Naive thymus-derived CD4-positive, alpha-beta T cell (primary cell): ENCODE measurements at regions of chr9 and their contacts with region 1.

Region 1: GRCh38 chr9:111937781-111938426 is 41.3 kb downstream of the UGCG start:
- DNase-seq: peak; percentile 12 to 71 (median 53)
- ATAC-seq: peak; percentile 96
- H3K4me3 ChIP-seq: peak overlapping the region; percentile 29
- H3K4me3 Mint-ChIP-seq: peak overlapping the region; percentile 52 to 82 (median 76)
- H3K27ac ChIP-seq: peak overlapping the region; percentile 19
- H3K27ac Mint-ChIP-seq: peak overlapping the region; percentile 83 to 93 (median 90)
- H3K4me1 ChIP-seq: peaks cover 15 to 19% of the 10 kb centered on the region in 2 donors
- H3K4me1 Mint-ChIP-seq: peaks cover 20 to 43% (median 33%) of the 10 kb centered on the region in 7 donors
- H3K27me3 ChIP-seq: no peaks in the 10 kb centered on the region
- H3K27me3 Mint-ChIP-seq: no peaks in the 10 kb centered on the region

Region 2: GRCh38 chr9:111805830-111806241 is 132.1 kb before region 1 on chr9:
- CTCF ChIA-PET with region 1: no interaction called
- POLR2A ChIA-PET with region 1: no interaction called
- intact Hi-C with region 1: no loop called
- DNase-seq: no peak
- ATAC-seq: no peak
- H3K4me3 ChIP-seq: no peak overlapping the region
- H3K4me3 Mint-ChIP-seq: no peak overlapping the region
- H3K27ac ChIP-seq: no peak overlapping the region
- H3K27ac Mint-ChIP-seq: no peak overlapping the region
- H3K4me1 ChIP-seq: peaks cover 0 to 4% of the 10 kb centered on the region in 2 donors
- H3K4me1 Mint-ChIP-seq: peaks cover 7 to 28% (median 10%) of the 10 kb centered on the region in 7 donors
- H3K27me3 ChIP-seq: no peaks in the 10 kb centered on the region
- H3K27me3 Mint-ChIP-seq: no peaks in the 10 kb centered on the region

Region 3: GRCh38 chr9:111903996-111904395 is 33.9 kb before region 1 on chr9:
- CTCF ChIA-PET with region 1: no interaction called
- POLR2A ChIA-PET with region 1: no interaction called
- intact Hi-C with region 1: no loop called
- DNase-seq: no peak
- ATAC-seq: no peak
- H3K4me3 ChIP-seq: no peak overlapping the region
- H3K4me3 Mint-ChIP-seq: peak overlapping the region in 5 of 10 donors; percentile 6 to 49 (median 32)
- H3K27ac ChIP-seq: no peak overlapping the region
- H3K27ac Mint-ChIP-seq: peak overlapping the region in 5 of 9 donors; percentile 1 to 82 (median 21)
- H3K4me1 ChIP-seq: peaks cover 30 to 65% of the 10 kb centered on the region in 2 donors
- H3K4me1 Mint-ChIP-seq: peaks cover 37 to 56% (median 54%) of the 10 kb centered on the region in 7 donors
- H3K27me3 ChIP-seq: no peaks in the 10 kb centered on the region
- H3K27me3 Mint-ChIP-seq: no peaks in the 10 kb centered on the region

Region 4: DNA sequence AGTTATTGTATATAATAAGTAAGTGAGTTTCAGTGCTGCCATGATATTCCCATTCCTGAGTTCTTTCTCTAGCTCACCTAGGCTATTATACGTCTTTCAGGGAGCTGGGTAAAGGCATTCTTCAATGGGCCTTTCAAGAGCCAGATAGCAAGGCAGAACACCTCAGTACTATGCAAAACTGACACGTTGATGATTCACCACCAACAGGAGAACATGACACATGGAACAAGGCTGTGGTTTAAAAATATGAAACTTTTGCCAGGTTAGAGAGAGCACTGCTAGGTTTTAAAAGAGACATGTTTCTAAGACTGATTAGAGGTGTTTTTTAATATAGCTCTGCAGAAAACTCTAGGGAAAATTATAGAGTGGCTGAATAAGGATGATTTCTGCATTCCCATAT is 54.6 kb after region 1 on chr9:
- CTCF ChIA-PET with region 1: no interaction called
- POLR2A ChIA-PET with region 1: no interaction called
- intact Hi-C with region 1: loop called in 1 of 2 experiments (anchors 5 kb)
- DNase-seq: peak in 1 of 9 donors; percentile 32
- ATAC-seq: no peak
- H3K4me3 ChIP-seq: no peak overlapping the region
- H3K4me3 Mint-ChIP-seq: no peak overlapping the region
- H3K27ac ChIP-seq: no peak overlapping the region
- H3K27ac Mint-ChIP-seq: no peak overlapping the region
- H3K4me1 ChIP-seq: peaks cover 0 to 13% of the 10 kb centered on the region in 2 donors
- H3K4me1 Mint-ChIP-seq: peaks cover 6 to 23% (median 18%) of the 10 kb centered on the region in 7 donors
- H3K27me3 ChIP-seq: no peaks in the 10 kb centered on the region
- H3K27me3 Mint-ChIP-seq: peaks cover 0 to 17% (median 0%) of the 10 kb centered on the region in 5 donors

Region 5: DNA sequence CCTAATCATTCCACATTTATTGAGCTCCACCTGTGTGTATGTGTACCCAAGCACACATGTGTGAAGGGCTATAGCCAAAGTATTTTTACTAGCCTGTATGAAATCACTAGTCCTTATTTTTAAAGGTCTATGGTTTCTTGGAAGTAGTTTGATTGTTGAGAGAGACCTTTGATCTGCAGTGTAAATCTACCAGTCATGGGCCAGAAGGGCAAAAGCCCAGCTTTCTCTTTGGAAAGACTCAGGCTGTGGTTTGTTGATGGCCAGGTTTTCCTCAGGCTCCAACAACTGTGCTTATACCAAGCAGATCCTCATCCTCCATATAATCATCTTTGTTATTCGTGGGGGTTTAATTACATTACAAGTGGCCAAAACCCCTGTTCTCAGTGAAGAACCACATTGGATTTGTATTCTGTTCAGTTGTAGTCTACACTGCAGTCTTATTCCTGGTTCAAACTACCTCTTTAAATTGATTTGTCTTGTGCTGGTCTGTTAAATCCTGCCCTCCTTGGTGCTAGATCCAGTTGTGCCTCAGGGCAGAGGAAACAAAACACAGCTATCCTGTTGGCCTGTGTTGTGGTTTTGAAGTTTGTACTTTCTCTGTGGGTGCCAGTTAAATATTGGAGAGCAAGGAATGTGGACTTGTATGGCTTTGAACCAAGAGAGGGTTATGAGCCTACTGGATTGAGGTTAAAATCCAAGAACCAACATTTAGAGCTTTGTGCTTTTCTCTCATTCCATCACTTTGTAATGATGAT is 1324.2 kb after region 1 on chr9:
- CTCF ChIA-PET with region 1: no interaction called
- POLR2A ChIA-PET with region 1: no interaction called
- intact Hi-C with region 1: no loop called
- DNase-seq: no peak
- ATAC-seq: no peak
- H3K4me3 ChIP-seq: no peak overlapping the region
- H3K4me3 Mint-ChIP-seq: no peak overlapping the region
- H3K27ac ChIP-seq: no peak overlapping the region
- H3K27ac Mint-ChIP-seq: no peak overlapping the region
- H3K4me1 ChIP-seq: no peaks in the 10 kb centered on the region
- H3K4me1 Mint-ChIP-seq: peaks cover 0 to 2% (median 0%) of the 10 kb centered on the region in 7 donors
- H3K27me3 ChIP-seq: no peaks in the 10 kb centered on the region
- H3K27me3 Mint-ChIP-seq: no peaks in the 10 kb centered on the region